SK-N-SH (cell line): ENCODE measurements at regions of chr11 and their contacts with region 1.

Region 1: DNA sequence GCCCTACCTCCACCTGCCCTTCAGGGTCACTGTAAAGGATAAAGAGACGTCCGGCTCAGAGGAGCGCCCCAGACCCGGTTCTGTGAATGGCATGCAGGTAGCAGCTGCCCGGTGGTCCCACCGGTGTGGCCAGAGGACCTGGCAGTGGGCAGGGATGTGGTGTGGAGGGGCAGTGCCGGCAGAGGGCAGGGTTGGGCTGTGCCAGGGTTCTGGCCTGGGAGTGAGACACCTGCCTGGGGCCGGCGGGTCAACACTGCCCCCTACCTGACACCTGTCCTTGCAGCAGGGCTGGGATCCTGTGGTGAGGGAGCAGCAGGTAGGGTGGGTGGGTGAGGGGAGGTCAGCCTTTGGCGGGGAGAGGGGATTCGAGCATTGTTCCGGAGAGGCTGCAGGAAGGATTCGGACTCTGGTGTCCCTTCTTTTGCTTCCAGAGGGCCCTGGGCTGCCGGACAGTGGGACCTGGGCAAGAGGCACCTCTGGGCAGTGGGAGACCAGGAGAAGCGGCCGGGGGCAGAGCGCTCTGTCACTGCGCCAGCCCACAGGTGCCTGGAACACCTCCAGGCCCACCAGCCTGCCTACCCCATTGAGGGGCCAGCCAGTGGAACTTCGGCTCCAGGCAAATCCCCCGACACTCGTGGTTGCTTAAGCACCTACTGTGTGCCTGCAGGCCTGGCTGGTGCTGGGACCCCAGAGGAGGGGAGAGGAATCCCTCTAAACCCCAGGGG is 1.6 kb upstream of the PHLDA2 start:
- DNase-seq: peak; percentile 84
- H3K4me3 ChIP-seq: peak overlapping the region; percentile 46 to 66; a peak in 3 of 4 replicates
- H3K27ac ChIP-seq: peak overlapping the region in 1 of 2 experiments; percentile 60; a peak in 1 of 4 replicates
- H3K4me1 ChIP-seq: peaks cover 0 to 14% of the 10 kb centered on the region in 2 experiments; a peak in 2 of 4 replicates
- H3K27me3 ChIP-seq: no peaks in the 10 kb centered on the region
- CTCF ChIP-seq: peak; percentile 55
- EP300 ChIP-seq: no peak
- RAD21 ChIP-seq: peak; percentile 69

Region 2: GRCh38 chr11:2892215-2893020 is 38.4 kb before region 1 on chr11:
- CTCF ChIA-PET with region 1: interaction called, 15 read pairs
- POLR2A ChIA-PET with region 1: no interaction called
- DNase-seq: peak; percentile 92
- H3K4me3 ChIP-seq: peak overlapping the region; percentile 23 to 39; a peak in 2 of 4 replicates
- H3K27ac ChIP-seq: no peak overlapping the region
- H3K4me1 ChIP-seq: peaks cover 0 to 14% of the 10 kb centered on the region in 2 experiments; a peak in 1 of 4 replicates
- H3K27me3 ChIP-seq: no peaks in the 10 kb centered on the region
- CTCF ChIP-seq: peak; percentile 88
- EP300 ChIP-seq: no peak
- RAD21 ChIP-seq: peak; percentile 77